ENCODE measurements at regions of chr9 and their contacts with region 1.

Region 1: DNA sequence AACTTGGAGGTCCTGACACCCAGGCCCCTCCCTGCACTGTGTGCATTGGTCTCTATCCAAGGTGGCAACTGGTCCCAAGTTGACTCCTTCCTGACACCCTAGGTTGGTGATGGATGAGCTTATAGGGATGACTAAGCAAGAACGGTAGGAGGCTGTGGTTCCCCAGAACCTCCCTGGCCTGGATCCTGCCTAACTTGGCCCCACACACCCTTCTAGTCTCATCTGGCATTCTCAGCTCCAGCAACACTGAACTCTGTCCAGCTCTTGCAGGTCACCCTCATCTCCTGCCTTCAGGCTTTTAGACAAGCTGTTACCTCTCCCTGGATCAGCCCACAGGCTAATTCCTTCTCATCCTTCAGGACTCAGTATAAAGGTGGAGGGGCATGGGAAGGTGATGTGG is 16.5 kb downstream of the AQP3 start:
- DNase-seq: no peak
- H3K4me3 ChIP-seq: no peak overlapping the region
- H3K4me1 ChIP-seq: no peaks in the 10 kb centered on the region
- H3K27me3 ChIP-seq: no peaks in the 10 kb centered on the region

Region 2: GRCh38 chr9:33374634-33375213 is 56.2 kb before region 1 on chr9:
- in situ Hi-C with region 1: loop called (anchors 10 kb)
- DNase-seq: peak; percentile 78 to 83
- H3K4me3 ChIP-seq: no peak overlapping the region
- H3K4me1 ChIP-seq: peaks cover 6% of the 10 kb centered on the region
- H3K27me3 ChIP-seq: no peaks in the 10 kb centered on the region